A673 (cell line): ENCODE measurements at regions of chr11 and their contacts with region 1.

Region 1: DNA sequence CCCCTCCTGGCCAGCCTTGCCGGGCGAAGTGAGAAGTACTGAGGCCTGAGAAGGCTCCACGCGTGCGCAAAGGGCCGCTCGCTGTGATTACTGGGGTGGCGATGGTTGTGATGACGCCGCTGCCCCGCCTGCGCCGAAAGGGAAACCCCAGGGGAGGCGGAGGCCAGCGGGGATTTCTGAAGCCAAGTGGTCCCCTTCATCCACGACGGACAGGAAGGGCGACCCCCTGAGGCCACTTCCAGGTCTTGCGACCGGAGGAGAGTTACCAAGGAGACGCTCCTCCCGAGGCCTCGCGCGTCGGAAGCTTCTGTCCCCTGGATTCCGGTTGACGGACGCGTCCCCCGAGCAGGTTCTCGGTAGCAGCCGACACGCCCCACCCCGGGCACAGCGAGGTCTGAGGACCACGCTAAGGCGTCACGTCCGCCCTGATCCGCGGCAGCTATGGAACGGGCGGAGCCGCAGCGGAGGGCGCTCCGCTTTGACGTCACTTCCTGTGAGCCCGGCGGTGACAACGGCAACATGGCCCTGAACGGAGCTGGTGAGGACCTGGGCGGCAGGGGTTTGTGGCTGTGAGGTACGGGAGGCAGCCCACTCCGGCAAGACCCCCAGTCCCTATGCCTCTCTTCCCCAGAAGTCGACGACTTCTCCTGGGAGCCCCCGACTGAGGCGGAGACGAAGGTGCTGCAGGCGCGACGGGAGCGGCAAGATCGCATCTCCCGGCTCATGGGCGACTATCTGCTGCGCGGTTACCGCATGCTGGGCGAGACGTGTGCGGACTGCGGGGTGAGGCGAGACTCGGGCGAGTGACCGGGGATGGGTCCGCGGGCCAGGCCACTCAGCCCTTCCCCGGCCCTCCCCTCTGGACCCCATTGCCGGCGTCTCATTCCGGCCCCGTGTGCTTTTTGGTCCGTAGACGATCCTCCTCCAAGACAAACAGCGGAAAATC is at the start of gene ZNRD2:
- DNase-seq: peak; percentile 100
- H3K4me3 ChIP-seq: peak within 1 kb of the TSS; percentile 87
- H3K27ac ChIP-seq: peak within 1 kb of the TSS; percentile 92
- H3K4me1 ChIP-seq: peaks cover 28% of the 10 kb centered on the region
- H3K27me3 ChIP-seq: no peaks in the 10 kb centered on the region
- CTCF ChIP-seq: peak; percentile 64
- total RNA-seq, gene ZNRD2: 95.4 and 98.9 TPM in 2 replicates

Region 2: DNA sequence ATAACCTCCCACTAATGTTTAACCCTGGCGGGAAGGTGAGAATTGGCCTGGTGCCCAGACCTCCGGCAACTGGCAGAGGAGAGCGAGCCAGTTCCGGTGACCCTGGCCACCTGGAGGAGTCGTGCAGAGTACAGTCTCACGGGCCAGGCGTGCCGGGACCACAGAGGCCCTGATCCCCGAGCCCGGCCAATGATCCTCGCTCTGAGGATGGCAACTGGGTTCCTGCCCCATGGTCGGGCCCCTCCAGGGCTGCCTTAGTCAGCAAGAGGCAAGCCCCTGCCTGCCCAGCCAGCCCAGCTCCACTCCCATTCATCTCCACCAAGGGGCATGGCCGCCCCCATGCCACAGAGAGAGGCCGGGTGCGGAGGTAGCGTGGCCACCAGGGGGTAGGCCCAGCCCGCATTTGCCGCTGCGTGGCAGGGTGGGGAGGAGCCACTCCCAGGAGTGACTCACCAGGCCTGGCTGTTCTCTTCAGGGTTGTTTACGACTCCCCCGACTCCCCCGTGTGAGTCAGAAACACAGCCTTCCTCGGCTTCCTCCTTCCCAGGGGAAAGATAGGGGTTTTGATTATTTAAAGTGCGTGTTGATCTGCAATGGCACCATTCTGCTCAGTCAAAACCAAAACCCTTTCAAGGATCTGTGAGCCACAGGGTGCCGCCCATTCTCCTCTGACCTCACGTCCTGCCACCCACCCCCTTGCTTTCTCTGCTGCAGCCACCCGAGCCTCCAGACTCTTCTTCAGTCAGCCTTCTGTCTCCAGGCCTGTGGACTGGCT is 188.0 kb before region 1 on chr11 and contains the start of gene SLC25A45:
- CTCF ChIA-PET with region 1: no interaction called
- POLR2A ChIA-PET with region 1: no interaction called
- intact Hi-C with region 1: loop called (anchors 5 kb)
- DNase-seq: peak; percentile 99
- H3K4me3 ChIP-seq: peak within 1 kb of the TSS; percentile 40
- H3K27ac ChIP-seq: peak within 1 kb of the TSS; percentile 94
- H3K4me1 ChIP-seq: peaks cover 40% of the 10 kb centered on the region
- H3K27me3 ChIP-seq: no peaks in the 10 kb centered on the region
- CTCF ChIP-seq: peak; percentile 82
- total RNA-seq, gene SLC25A45: 5.3 and 7.4 TPM in 2 replicates

Region 3: DNA sequence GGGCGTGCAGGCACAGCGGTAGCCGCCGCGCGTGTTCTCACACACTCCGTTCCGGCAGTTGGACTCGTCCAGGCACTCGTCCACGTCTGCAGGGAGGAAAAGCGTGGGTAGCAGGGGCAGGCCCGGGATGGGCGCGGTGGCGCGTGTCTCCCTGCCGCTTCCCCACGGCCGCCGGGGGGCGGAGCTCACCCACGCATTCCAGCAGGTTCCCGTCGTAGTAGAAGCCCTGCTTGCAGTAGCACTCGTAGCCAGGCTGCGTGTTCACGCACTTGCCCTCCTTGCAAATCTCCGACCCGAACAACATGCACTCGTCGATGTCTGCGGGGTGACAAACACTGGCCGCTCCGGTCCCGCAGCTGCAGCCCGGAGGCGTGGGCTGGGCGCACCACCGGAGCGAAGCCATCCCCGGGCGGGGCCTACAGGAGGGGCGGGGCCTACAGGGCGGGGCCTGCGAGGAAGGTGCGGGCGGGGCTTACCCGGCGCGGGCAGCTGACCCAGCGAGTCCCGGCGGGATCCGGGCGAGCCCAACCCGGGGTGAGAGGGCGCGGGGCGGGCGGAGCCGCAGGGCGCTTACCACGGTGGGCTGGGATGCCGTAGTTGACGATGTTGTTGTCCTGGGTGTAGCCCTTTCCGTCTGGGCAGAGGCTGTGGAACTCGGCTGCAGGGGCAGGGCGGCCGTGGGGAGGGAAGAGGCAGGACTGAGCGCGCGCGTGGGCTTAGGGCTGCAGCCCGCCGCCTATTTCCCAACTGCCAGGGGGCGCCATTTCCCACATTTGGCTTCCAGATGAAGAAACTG is 29.8 kb before region 1 on chr11:
- CTCF ChIA-PET with region 1: interaction called, 13 read pairs
- POLR2A ChIA-PET with region 1: interaction called, 4 read pairs
- intact Hi-C with region 1: loop called (anchors 1 kb)
- DNase-seq: peak; percentile 95
- H3K4me3 ChIP-seq: peak overlapping the region; percentile 57
- H3K27ac ChIP-seq: peak overlapping the region; percentile 52
- H3K4me1 ChIP-seq: peaks cover 10% of the 10 kb centered on the region
- H3K27me3 ChIP-seq: no peaks in the 10 kb centered on the region
- CTCF ChIP-seq: peak; percentile 92

Region 4: DNA sequence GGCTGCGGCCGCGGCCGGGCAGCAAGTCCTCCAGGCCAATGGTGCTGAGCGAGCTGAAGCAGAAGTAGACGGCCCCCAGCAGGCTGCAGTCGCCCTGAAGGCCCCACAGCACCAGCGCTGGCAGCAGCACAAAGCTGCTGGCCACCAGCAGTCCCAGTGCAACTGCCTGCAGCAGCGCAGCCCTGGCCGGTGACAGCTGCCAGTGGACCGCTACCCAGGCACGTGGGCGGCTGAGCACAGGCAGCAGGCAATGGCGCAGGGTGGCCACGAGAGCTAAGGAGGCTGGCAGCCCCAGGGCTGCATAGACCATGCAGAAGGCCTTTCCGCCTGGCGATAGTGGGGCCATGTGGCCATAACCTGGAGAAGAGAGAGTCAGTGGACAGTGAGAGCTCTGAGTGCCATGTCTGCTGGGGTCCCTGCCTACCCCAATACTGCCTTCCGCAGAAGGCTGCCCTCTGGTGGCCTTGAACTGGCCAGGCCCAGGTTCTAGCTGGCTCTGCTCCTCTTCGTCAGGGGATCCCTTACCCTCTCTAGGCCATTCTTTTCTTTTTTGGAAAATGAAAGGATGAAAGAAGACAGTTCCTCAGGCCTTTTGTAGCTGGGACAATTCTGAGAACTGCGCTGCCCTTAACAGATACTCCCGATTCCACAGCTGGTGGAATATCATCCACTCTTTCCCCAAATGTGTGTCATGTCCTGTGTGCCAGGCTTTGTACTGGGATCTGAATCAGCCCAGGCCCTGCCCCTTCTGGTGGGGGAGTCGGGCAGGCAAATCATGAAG is 23.5 kb after region 1 on chr11:
- CTCF ChIA-PET with region 1: interaction called, 12 read pairs
- POLR2A ChIA-PET with region 1: no interaction called
- intact Hi-C with region 1: no loop called
- DNase-seq: peak; percentile 55
- H3K4me3 ChIP-seq: no peak overlapping the region
- H3K27ac ChIP-seq: no peak overlapping the region
- H3K4me1 ChIP-seq: peaks cover 5% of the 10 kb centered on the region
- H3K27me3 ChIP-seq: no peaks in the 10 kb centered on the region
- CTCF ChIP-seq: peak; percentile 79

Region 5: GRCh38 chr11:65606876-65607613 is 36.8 kb after region 1 on chr11:
- CTCF ChIA-PET with region 1: interaction called, 3 read pairs
- POLR2A ChIA-PET with region 1: no interaction called
- intact Hi-C with region 1: loop called (anchors 5 kb)
- DNase-seq: peak; percentile 100
- H3K4me3 ChIP-seq: peak overlapping the region; percentile 35
- H3K27ac ChIP-seq: peak overlapping the region; percentile 57
- H3K4me1 ChIP-seq: peaks cover 14% of the 10 kb centered on the region
- H3K27me3 ChIP-seq: no peaks in the 10 kb centered on the region
- CTCF ChIP-seq: no peak

Region 6: DNA sequence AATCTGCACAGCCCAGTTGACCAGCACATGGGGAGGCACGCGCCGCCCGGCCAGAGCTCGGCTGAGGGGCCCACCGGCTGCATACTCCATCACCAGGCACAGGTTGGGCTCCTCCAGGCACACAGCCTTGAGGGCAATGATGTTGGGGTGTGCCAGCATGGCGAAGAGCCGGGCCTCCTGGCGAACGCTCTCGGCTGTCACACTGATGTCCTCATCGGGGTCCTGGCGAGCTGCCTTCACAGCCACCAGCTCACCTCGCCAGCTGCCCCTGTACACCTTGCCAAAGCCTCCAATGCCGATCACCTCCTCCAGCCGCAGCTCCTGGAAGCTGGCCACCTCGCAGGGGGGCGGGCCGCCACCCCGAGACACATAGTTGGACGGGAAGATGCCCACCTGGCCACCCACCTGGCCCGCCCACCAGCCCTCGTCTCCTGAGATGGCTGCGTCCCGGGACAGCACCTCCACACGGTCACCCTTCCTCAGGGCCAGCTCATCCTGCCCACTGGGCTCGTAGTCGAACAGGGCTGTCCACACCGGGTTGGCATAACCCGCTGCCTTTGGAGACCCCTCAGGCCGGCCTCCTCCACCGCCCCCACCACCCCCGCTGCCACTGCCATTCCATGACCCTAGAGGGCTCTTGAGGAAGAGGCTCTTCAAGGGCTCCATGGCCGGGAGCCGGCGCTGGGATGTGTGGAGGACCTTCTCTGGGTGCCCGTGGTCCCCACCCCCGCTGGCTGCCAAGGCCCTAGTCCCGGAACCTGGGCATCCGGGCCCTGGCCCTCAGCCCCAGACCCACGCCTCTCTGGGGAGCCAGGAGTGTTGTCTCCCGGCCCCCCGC is 43.1 kb after region 1 on chr11:
- CTCF ChIA-PET with region 1: no interaction called
- POLR2A ChIA-PET with region 1: interaction called, 12 read pairs
- intact Hi-C with region 1: loop called (anchors 5 kb)
- DNase-seq: no peak
- H3K4me3 ChIP-seq: peak overlapping the region; percentile 92
- H3K27ac ChIP-seq: peak overlapping the region; percentile 90
- H3K4me1 ChIP-seq: peaks cover 25% of the 10 kb centered on the region
- H3K27me3 ChIP-seq: no peaks in the 10 kb centered on the region
- CTCF ChIP-seq: no peak